ENCODE measurements at regions of chr10 and their contacts with region 1.

Region 1: GRCh38 chr10:71285180-71285545 is 33.9 kb upstream of the SLC29A3 start:
- DNase-seq: peak; percentile 47 to 59
- H3K4me3 ChIP-seq: no peak overlapping the region
- H3K27ac ChIP-seq: no peak overlapping the region
- H3K4me1 ChIP-seq: no peaks in the 10 kb centered on the region
- H3K27me3 ChIP-seq: no peaks in the 10 kb centered on the region
- CTCF ChIP-seq: peak; percentile 45 to 78 (median 74)
- POLR2A ChIP-seq: no peak

Region 2: GRCh38 chr10:70834441-70835151 is 450.6 kb before region 1 on chr10:
- intact Hi-C with region 1: no loop called
- DNase-seq: no peak
- H3K4me3 ChIP-seq: no peak overlapping the region
- H3K27ac ChIP-seq: no peak overlapping the region
- H3K4me1 ChIP-seq: peaks cover 21 to 27% of the 10 kb centered on the region in 2 donors
- H3K27me3 ChIP-seq: no peaks in the 10 kb centered on the region
- CTCF ChIP-seq: no peak
- POLR2A ChIP-seq: no peak

Region 3: DNA sequence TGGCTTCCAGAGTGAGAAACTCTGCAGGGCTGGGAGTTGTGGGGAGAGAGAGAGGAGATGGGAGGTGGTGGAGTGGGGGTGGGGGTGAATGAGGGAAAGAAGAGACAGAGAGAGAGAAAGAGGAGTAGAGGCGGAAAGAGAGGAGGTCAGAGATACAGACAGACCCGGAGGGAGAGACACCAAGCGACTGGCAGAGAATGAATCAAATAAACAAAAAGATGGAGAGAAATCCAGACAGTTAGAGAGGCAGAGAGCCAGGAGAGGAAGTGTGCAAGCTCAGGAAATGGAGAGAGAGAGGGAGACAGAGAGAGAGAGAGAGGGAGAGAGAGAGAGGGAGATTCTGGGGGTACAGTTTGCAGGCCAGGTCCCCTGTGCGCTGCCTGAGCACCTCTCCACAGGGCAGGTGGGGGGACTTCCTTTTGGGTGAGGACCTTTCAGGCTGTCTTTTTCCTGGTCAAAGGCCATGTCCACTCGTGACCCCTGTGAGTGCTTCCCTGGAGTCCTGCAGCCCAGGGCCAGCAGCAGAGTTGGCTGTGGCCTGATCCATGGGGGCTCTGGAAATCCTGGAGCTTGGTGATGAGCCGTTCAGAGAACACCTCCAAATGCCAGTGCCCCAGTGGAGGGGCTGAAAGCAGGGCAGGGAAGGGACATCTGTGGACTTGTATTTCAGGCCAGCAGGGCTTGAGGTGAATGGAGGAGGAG is 371.8 kb before region 1 on chr10:
- intact Hi-C with region 1: loop called (anchors 5 kb)
- DNase-seq: no peak
- H3K4me3 ChIP-seq: no peak overlapping the region
- H3K27ac ChIP-seq: no peak overlapping the region
- H3K4me1 ChIP-seq: no peaks in the 10 kb centered on the region
- H3K27me3 ChIP-seq: no peaks in the 10 kb centered on the region
- CTCF ChIP-seq: no peak
- POLR2A ChIP-seq: no peak

Region 4: DNA sequence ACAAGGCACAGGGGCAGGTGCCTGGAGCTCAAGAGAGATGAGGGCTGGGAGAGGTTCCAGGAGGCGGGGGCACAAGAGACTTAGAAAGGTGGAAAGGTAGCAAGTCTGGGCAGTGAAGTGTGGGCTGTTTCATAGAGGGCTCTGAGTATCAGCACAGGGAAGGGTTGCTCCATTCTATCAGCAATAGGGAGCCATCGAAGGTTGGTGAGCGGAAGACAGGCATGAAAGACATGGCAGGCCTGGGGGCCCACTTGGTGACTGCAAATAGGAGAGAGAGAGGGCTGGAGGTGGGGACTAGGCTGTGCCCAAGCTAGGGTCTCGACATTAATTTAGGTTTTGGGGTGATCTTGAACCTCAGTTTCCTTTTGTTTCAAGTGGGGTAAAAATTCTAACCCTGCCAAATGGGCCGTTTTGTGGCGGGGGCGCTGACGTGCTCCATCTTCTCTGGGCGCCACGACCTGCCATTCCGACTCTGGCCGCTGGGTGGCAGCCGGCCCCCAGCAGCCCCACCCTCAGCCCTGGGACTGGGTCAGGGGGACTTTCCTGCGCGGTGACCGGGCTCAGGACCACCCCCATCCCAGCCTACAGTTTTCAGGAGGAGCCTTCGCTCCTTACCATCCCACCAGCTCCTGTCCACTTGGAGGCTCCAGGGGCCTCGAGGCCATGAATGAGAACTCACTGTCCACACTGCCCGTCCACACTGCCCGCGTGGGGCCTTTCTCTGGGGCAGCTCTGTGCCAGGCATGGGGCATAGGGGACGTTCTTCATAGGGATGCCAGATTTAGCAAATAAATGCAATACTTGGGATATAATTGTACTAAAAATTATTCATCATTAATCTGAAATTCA is 359.6 kb before region 1 on chr10:
- intact Hi-C with region 1: loop called (anchors 5 kb)
- DNase-seq: peak; percentile 15 to 27
- H3K4me3 ChIP-seq: no peak overlapping the region
- H3K27ac ChIP-seq: no peak overlapping the region
- H3K4me1 ChIP-seq: no peaks in the 10 kb centered on the region
- H3K27me3 ChIP-seq: no peaks in the 10 kb centered on the region
- CTCF ChIP-seq: peak; percentile 65 to 96 (median 77)
- POLR2A ChIP-seq: no peak

Region 5: GRCh38 chr10:71191531-71192076 is 93.6 kb before region 1 on chr10:
- intact Hi-C with region 1: no loop called
- DNase-seq: no peak
- H3K4me3 ChIP-seq: no peak overlapping the region
- H3K27ac ChIP-seq: no peak overlapping the region
- H3K4me1 ChIP-seq: no peaks in the 10 kb centered on the region
- H3K27me3 ChIP-seq: no peaks in the 10 kb centered on the region
- CTCF ChIP-seq: no peak
- POLR2A ChIP-seq: no peak

Region 6: GRCh38 chr10:71333129-71333887 is 48.1 kb after region 1 on chr10:
- intact Hi-C with region 1: no loop called
- DNase-seq: no peak
- H3K4me3 ChIP-seq: no peak overlapping the region
- H3K27ac ChIP-seq: no peak overlapping the region
- H3K4me1 ChIP-seq: peaks cover 16 to 31% of the 10 kb centered on the region in 2 donors
- H3K27me3 ChIP-seq: no peaks in the 10 kb centered on the region
- CTCF ChIP-seq: no peak
- POLR2A ChIP-seq: no peak

Region 7: GRCh38 chr10:71462062-71462935 is 177.1 kb after region 1 on chr10:
- intact Hi-C with region 1: no loop called
- DNase-seq: no peak
- H3K4me3 ChIP-seq: no peak overlapping the region
- H3K27ac ChIP-seq: no peak overlapping the region
- H3K4me1 ChIP-seq: no peaks in the 10 kb centered on the region
- H3K27me3 ChIP-seq: no peaks in the 10 kb centered on the region
- CTCF ChIP-seq: no peak
- POLR2A ChIP-seq: no peak

Measured in thyroid gland (tissue), 4 donors.